Prostate gland (tissue), 2 donors: ENCODE measurements at regions of chr16 and their contacts with region 1.

Region 1: GRCh38 chr16:10828851-10829731 is 10.5 kb upstream of the TVP23A start:
- DNase-seq: peak; percentile 87
- H3K4me3 ChIP-seq: no peak overlapping the region
- H3K27ac ChIP-seq: peak overlapping the region; percentile 82 to 85
- H3K4me1 ChIP-seq: peaks cover 17% of the 10 kb centered on the region
- H3K27me3 ChIP-seq: no peaks in the 10 kb centered on the region
- CTCF ChIP-seq: no peak
- POLR2A ChIP-seq: no peak

Region 2: GRCh38 chr16:10876799-10877341 is 47.8 kb after region 1 on chr16 and contains the start of gene CIITA:
- intact Hi-C with region 1: loop called (anchors 5 kb)
- DNase-seq: no peak
- H3K4me3 ChIP-seq: no peak within 1 kb of the TSS
- H3K27ac ChIP-seq: no peak within 1 kb of the TSS
- H3K4me1 ChIP-seq: no peaks in the 10 kb centered on the region
- H3K27me3 ChIP-seq: no peaks in the 10 kb centered on the region
- CTCF ChIP-seq: no peak
- POLR2A ChIP-seq: no peak
- total RNA-seq, gene CIITA: 11.7 to 16.0 TPM

Region 3: DNA sequence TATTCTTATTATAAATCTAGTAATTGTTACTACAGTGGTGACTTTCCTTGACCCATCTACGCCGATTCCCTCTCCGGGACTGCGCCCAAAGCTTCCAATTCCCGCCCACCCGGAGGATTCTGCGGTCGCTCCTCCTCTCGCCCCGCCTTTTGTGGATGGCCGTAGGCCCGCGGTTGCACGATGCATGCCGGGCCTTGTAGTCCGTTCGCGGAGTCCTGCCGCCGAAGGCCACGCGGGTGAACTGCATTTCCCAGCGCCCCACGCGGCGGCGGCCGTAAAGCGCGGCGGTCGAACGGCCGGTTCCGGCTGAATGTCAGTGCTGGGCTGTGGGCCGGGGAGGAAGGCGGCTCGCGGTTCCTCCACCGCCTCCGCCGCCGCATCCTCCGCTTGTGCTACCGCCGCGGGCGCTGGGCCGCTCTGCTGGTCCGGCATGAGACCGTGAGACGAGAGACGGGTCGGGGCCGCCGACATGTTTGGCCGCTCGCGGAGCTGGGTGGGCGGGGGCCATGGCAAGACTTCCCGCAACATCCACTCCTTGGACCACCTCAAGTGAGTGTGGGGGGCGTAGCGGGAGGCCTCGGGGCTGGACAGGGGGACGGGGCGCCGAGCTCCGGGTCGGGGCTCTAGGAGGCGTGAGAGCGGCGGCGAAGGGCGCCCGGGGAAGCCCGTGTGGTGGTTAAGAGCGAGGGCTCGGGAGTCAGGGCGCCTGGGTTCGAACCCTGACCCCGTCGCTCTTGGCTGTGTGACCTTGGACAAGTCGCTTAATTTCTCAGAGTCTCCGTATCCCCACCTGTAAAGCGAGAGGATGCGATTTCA is 115.4 kb after region 1 on chr16 and contains the start of gene CLEC16A:
- intact Hi-C with region 1: no loop called
- DNase-seq: peak; percentile 96
- H3K4me3 ChIP-seq: peak within 1 kb of the TSS; percentile 83 to 90
- H3K27ac ChIP-seq: peak within 1 kb of the TSS; percentile 56 to 81
- H3K4me1 ChIP-seq: peaks cover 15% of the 10 kb centered on the region
- H3K27me3 ChIP-seq: no peaks in the 10 kb centered on the region
- CTCF ChIP-seq: peak in 3 of 4 experiments; percentile 17 to 74 (median 61)
- POLR2A ChIP-seq: peak; percentile 80
- total RNA-seq, gene CLEC16A: 26.1 to 52.2 TPM